Right cardiac atrium (tissue), 5 donors: ENCODE measurements at regions of chr3 and their contacts with region 1.

Region 1: DNA sequence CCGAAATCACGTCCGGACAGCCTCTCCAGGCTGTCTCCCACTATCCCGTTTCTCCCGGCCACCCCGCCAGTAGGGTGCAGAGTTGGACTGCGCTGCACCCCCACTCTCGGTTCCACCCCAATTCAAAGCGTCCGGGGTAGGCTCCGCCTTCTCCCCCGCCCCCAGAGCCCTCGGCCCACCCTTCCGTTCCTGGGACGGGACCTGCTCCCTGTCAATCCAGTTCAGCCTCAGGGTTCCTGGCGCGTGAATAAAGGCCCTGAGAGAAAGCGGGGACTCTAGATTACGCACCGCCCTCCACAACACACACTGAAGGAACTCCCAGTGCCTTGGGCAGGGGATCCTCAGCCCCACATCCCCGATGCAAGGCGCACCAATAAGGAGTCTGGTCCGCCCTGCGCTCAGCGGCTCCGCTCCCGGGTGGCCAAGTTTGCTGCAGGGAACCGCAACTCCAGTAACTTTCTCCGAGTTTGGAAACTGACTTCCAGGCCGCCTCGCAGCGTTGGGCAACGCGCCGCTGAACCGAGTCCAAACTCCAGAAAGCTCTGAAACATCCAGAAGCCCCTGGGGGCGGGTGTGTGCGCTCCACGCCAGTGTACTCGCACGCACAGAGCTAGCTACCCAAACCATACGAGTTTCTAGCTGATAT is 1.9 kb downstream of the ADAMTS9 start:
- DNase-seq: peak; percentile 94 to 97 (median 96)
- ATAC-seq: peak; percentile 90 to 94
- H3K4me3 ChIP-seq: peak overlapping the region; percentile 72
- H3K27ac ChIP-seq: peak overlapping the region; percentile 96
- H3K4me1 ChIP-seq: peaks cover 5% of the 10 kb centered on the region
- H3K27me3 ChIP-seq: no peaks in the 10 kb centered on the region

Region 2: GRCh38 chr3:64417816-64418215 is 268.1 kb before region 1 on chr3:
- intact Hi-C with region 1: no loop called
- DNase-seq: no peak
- ATAC-seq: no peak
- H3K4me3 ChIP-seq: no peak overlapping the region
- H3K27ac ChIP-seq: no peak overlapping the region
- H3K4me1 ChIP-seq: no peaks in the 10 kb centered on the region
- H3K27me3 ChIP-seq: no peaks in the 10 kb centered on the region

Region 3: DNA sequence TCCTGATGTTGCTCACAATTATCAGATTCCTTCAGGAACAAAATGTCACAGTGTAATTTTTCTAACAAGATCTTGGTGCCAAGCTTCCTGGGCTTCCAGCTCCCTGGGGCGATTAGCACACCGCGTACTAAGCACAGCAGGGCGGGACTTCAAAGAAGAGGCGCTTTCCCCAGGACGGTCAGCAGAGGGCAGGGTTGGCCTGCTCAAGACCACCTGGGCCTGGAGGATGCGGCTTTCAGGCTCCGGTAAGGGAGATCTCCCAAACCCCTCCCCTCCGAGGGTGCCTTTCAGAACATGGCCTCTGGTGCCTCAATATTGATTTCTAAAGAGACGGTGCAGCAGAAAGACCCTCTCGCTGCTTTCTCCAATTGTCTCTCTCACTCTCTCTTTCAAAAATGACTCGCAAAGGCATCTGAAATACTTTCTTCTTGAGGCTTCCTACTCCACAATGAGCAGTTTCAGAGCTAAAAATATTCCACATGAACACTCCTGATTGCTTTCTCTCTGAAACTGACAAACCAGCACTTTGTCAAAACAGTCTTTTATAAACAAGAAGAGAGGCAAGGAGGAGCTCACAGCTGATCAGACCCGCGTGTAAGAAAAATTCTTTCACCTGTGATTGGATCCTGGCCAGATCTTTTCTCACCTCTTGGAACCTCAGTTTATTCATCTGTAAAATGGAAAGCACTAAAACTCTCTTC is 152.2 kb before region 1 on chr3:
- intact Hi-C with region 1: loop called in 1 of 4 experiments (anchors 5 kb)
- DNase-seq: peak; percentile 85 to 95 (median 92)
- ATAC-seq: peak; percentile 94 to 97
- H3K4me3 ChIP-seq: no peak overlapping the region
- H3K27ac ChIP-seq: no peak overlapping the region
- H3K4me1 ChIP-seq: no peaks in the 10 kb centered on the region
- H3K27me3 ChIP-seq: no peaks in the 10 kb centered on the region

Region 4: GRCh38 chr3:64595253-64595694 is 90.6 kb before region 1 on chr3:
- intact Hi-C with region 1: loop called in 1 of 4 experiments (anchors 10 kb)
- DNase-seq: peak; percentile 70 to 84 (median 76)
- ATAC-seq: peak; percentile 94 to 96
- H3K4me3 ChIP-seq: no peak overlapping the region
- H3K27ac ChIP-seq: peak overlapping the region; percentile 88
- H3K4me1 ChIP-seq: no peaks in the 10 kb centered on the region
- H3K27me3 ChIP-seq: no peaks in the 10 kb centered on the region

Region 5: GRCh38 chr3:64759811-64760210 is 73.9 kb after region 1 on chr3:
- intact Hi-C with region 1: no loop called
- DNase-seq: no peak
- ATAC-seq: peak; percentile 51 to 65
- H3K4me3 ChIP-seq: no peak overlapping the region
- H3K27ac ChIP-seq: peak overlapping the region; percentile 42
- H3K4me1 ChIP-seq: peaks cover 9% of the 10 kb centered on the region
- H3K27me3 ChIP-seq: no peaks in the 10 kb centered on the region

Region 6: DNA sequence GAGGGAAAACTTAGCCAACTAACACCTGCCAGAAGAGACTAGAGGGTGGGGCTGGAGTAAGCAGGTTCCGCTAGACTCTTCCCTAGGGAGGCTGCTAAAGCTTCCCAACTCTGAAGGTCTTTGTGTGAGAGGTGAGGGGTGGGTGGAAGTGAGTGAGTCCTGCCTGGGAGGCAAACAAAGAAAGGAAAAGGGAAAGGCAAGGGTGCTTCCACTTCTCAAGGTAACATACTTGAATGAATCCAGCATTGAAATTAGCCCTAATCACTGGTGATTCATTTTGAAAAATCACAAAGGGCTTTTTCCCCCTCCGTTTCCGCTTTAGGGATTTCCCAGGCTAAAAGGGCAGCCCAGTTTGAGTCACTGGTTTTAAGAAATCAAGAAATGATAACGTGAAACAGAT is 222.4 kb after region 1 on chr3:
- intact Hi-C with region 1: loop called in 2 of 4 experiments (anchors 10 kb)
- DNase-seq: peak in 1 of 3 donors; percentile 22
- ATAC-seq: peak; percentile 56 to 95
- H3K4me3 ChIP-seq: no peak overlapping the region
- H3K27ac ChIP-seq: no peak overlapping the region
- H3K4me1 ChIP-seq: peaks cover 12% of the 10 kb centered on the region
- H3K27me3 ChIP-seq: no peaks in the 10 kb centered on the region

Region 7: GRCh38 chr3:65170390-65171042 is 484.6 kb after region 1 on chr3:
- intact Hi-C with region 1: loop called in 1 of 4 experiments (anchors 5 kb)
- DNase-seq: peak; percentile 89 to 94 (median 91)
- ATAC-seq: peak; percentile 85 to 95
- H3K4me3 ChIP-seq: no peak overlapping the region
- H3K27ac ChIP-seq: peak overlapping the region; percentile 68
- H3K4me1 ChIP-seq: peaks cover 2% of the 10 kb centered on the region
- H3K27me3 ChIP-seq: no peaks in the 10 kb centered on the region

Region 8: DNA sequence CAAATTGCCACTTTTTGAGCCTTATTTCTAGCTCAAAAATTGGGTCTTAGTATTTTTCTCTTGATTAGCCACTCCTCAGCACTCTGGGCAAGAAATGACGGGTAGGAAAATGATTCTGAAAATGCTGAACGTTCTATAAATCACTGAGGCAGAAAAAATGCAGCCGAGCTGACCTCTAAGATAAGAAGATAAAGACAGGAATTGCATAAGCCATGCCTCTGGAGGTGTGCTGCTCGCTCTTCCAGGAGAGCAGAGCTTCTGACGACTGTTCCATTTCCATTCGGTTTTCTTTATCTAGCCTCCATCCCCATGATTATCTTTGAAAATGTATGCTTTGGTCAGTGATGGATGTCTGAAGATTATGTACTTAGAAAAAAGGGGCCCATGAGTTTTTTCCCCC is 560.6 kb after region 1 on chr3:
- intact Hi-C with region 1: no loop called
- DNase-seq: no peak
- ATAC-seq: no peak
- H3K4me3 ChIP-seq: no peak overlapping the region
- H3K27ac ChIP-seq: no peak overlapping the region
- H3K4me1 ChIP-seq: no peaks in the 10 kb centered on the region
- H3K27me3 ChIP-seq: no peaks in the 10 kb centered on the region